PC-3 (cell line): ENCODE measurements at regions of chr5 and their contacts with region 1.

Region 1: DNA sequence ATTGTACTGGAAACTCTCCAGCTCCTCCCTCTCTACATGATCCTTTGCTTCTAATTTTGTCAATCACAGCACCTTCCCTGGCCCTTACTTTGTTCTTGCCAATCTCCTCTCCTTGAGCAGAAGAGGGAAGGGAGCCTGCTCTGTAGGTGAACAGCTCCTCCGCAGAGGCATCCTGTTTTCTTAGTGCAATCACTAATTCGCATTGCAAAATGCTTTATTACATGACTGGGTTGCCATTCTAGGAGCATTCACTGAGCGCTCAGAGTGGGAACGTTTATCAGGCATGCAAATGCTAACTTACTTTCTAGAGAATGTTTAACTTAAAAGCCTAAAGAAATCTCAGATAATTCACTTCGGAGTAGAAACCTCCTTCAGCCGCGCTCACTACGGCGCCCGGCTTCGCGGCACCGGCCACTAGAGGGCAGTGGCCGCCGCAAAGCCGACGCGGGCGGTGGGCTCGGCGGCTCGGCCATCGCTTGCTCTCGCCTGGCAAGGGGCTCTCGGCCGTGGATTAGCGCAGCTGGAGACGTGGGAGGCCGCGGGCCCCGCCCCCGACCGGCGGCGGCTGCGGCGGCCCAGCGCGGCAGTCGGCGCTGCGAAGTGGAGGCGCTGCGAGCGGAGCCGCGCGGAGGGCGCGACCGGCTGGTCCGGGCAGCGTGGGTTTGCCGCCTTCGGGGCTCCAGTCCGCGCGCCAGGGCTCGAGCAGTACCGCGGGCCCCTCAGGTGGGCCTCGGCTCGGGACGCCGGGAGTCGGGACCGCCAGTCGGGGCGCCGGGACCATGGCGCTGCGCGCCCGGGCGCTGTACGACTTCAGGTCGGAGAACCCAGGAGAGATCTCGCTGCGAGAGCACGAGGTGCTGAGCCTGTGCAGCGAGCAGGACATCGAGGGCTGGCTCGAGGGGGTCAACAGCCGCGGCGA is at the start of gene SNX18:
- DNase-seq: peak; percentile 85
- ATAC-seq: peak; percentile 82
- H3K4me3 ChIP-seq: peak within 1 kb of the TSS; percentile 76
- H3K27ac ChIP-seq: no peak within 1 kb of the TSS
- H3K4me1 ChIP-seq: peaks cover 21% of the 10 kb centered on the region
- H3K27me3 ChIP-seq: no peaks in the 10 kb centered on the region
- CTCF ChIP-seq: peak; percentile 77
- total RNA-seq, gene SNX18: 14.3 and 16.5 TPM in 2 replicates

Region 2: GRCh38 chr5:54619731-54620547 is 102.5 kb after region 1 on chr5:
- CTCF ChIA-PET with region 1: no interaction called
- POLR2A ChIA-PET with region 1: no interaction called
- intact Hi-C with region 1: loop called (anchors 5 kb)
- DNase-seq: peak; percentile 62
- ATAC-seq: peak; percentile 81
- H3K4me3 ChIP-seq: no peak overlapping the region
- H3K27ac ChIP-seq: no peak overlapping the region
- H3K4me1 ChIP-seq: peaks cover 8% of the 10 kb centered on the region
- H3K27me3 ChIP-seq: no peaks in the 10 kb centered on the region
- CTCF ChIP-seq: no peak

Region 3: GRCh38 chr5:54634089-54634488 is 116.7 kb after region 1 on chr5:
- CTCF ChIA-PET with region 1: no interaction called
- POLR2A ChIA-PET with region 1: no interaction called
- intact Hi-C with region 1: no loop called
- DNase-seq: peak; percentile 8
- ATAC-seq: no peak
- H3K4me3 ChIP-seq: no peak overlapping the region
- H3K27ac ChIP-seq: no peak overlapping the region
- H3K4me1 ChIP-seq: 0 out of 2 replicates have a peak, but pooled peaks cover 8% of the 10 kb centered on the region
- H3K27me3 ChIP-seq: no peaks in the 10 kb centered on the region
- CTCF ChIP-seq: no peak

Region 4: DNA sequence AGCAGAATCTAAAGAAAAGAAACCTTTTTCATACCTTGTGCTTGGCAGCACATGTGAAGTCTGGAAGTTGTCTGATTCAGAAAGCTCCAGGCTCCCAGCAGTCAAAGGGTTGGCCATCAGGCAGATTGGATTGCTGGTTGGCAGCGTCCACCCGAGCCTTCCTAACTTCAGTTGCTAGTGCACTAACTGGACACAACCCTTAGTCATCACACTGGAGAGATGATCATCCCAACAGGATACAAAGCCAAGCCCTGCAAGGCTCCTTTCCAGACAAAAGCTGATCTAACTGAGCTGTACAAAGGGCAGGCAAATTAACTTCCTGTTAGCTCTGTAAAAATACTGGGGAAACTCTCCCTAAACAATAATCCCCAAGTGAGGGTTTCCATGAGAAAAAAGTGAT is 185.7 kb after region 1 on chr5:
- CTCF ChIA-PET with region 1: no interaction called
- POLR2A ChIA-PET with region 1: no interaction called
- intact Hi-C with region 1: loop called (anchors 10 kb)
- DNase-seq: peak; percentile 81
- ATAC-seq: peak; percentile 65
- H3K4me3 ChIP-seq: no peak overlapping the region
- H3K27ac ChIP-seq: peak overlapping the region; percentile 58
- H3K4me1 ChIP-seq: peaks cover 42% of the 10 kb centered on the region
- H3K27me3 ChIP-seq: no peaks in the 10 kb centered on the region
- CTCF ChIP-seq: no peak

Region 5: DNA sequence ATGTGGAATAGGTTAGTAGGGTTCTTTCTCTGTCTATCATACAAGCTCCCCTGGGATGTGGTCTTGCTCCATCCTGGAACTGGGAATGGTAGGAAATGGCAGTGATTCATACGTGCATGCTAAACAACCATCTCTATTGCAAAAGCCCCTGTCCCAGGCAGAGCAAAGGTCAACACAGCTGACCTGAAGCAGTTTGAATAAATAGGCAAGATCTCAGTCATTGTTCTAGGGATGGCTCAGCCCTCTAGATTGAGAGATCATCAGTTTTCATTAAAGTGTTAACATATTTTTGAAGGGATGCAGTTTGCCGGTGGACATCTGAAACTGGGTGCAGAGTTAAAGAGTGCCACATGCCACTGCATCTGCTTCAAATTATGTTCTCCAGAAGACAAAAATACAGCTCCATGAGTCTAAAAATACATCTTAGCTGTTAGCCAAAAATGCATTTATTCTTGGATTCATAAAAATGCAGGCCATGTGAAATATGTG is 243.8 kb after region 1 on chr5:
- CTCF ChIA-PET with region 1: interaction called, 10 read pairs
- POLR2A ChIA-PET with region 1: no interaction called
- intact Hi-C with region 1: no loop called
- DNase-seq: no peak
- ATAC-seq: no peak
- H3K4me3 ChIP-seq: no peak overlapping the region
- H3K27ac ChIP-seq: no peak overlapping the region
- H3K4me1 ChIP-seq: peaks cover 4% of the 10 kb centered on the region
- H3K27me3 ChIP-seq: no peaks in the 10 kb centered on the region
- CTCF ChIP-seq: no peak

Region 6: GRCh38 chr5:54867310-54867944 is 350.0 kb after region 1 on chr5:
- CTCF ChIA-PET with region 1: interaction called, 28 read pairs
- POLR2A ChIA-PET with region 1: no interaction called
- intact Hi-C with region 1: loop called (anchors 1 kb)
- DNase-seq: peak; percentile 59
- ATAC-seq: no peak; the same call in 1 of the 2 replicates
- H3K4me3 ChIP-seq: peak overlapping the region; percentile 18; the same call in 1 of the 2 replicates
- H3K27ac ChIP-seq: no peak overlapping the region
- H3K4me1 ChIP-seq: no peaks in the 10 kb centered on the region
- H3K27me3 ChIP-seq: peaks cover 17% of the 10 kb centered on the region; the same call in 1 of the 2 replicates
- CTCF ChIP-seq: peak; percentile 60